T-cell (primary cell): ENCODE measurements at regions of chr5 and their contacts with region 1.

Region 1: GRCh38 chr5:14816999-14817761 is 54.4 kb downstream of the ANKH start:
- DNase-seq: no peak
- ATAC-seq: no peak
- H3K4me3 ChIP-seq: no peak overlapping the region
- H3K4me3 Mint-ChIP-seq: no peak overlapping the region
- H3K27ac ChIP-seq: no peak overlapping the region
- H3K27ac Mint-ChIP-seq: peak overlapping the region in 1 of 2 donors; percentile 0
- H3K4me1 ChIP-seq: peaks cover 14 to 18% of the 10 kb centered on the region in 2 experiments
- H3K4me1 Mint-ChIP-seq: peaks cover 68 to 83% (median 83%) of the 10 kb centered on the region in 3 donors
- H3K27me3 ChIP-seq: no peaks in the 10 kb centered on the region
- H3K27me3 Mint-ChIP-seq: no peaks in the 10 kb centered on the region

Region 2: DNA sequence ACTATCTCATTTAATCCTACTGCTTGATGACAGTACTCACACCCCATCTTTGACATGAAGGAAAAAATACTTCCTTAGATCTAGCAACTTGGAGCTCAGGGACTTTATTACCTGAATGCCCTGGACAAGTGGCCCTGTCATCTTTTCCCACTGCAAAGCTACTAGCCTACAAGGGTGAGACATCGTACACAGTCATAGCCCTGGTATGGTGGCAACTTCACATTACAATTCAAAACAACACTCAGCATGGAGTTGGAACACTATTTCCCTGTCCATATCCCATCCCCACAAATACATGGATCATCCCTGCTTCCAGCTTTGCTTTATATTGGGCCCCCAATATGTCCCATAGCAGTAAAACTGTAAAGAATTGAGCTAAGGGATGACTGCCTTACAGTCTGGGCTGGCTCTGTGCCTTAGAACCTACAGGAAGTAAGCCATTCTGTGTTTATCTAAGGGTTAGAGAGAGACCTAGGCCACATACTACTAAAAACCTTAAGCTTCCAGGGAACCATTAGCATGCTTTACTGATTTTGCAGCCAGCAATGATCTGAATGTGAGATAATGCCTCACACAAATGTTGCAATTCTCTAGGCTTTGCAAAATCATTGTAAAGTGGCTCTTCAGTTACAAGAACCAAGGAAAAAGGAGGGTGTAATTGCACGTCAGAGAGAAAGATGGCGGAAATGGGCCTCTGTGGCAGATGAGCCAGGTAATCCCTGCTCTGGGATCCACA is 96.8 kb before region 1 on chr5:
- CTCF ChIA-PET with region 1: interaction called in 1 of 2 experiments, 4 read pairs
- POLR2A ChIA-PET with region 1: interaction called in 1 of 2 experiments, 13 read pairs
- DNase-seq: no peak
- ATAC-seq: peak in 3 of 4 experiments; percentile 66 to 84 (median 71)
- H3K4me3 ChIP-seq: no peak overlapping the region
- H3K4me3 Mint-ChIP-seq: no peak overlapping the region
- H3K27ac ChIP-seq: no peak overlapping the region
- H3K27ac Mint-ChIP-seq: peak overlapping the region; percentile 58 to 76
- H3K4me1 ChIP-seq: peaks cover 0 to 10% of the 10 kb centered on the region in 2 experiments
- H3K4me1 Mint-ChIP-seq: peaks cover 31 to 38% (median 32%) of the 10 kb centered on the region in 3 donors
- H3K27me3 ChIP-seq: no peaks in the 10 kb centered on the region
- H3K27me3 Mint-ChIP-seq: no peaks in the 10 kb centered on the region

Region 3: GRCh38 chr5:15056988-15057592 is 239.9 kb after region 1 on chr5:
- CTCF ChIA-PET with region 1: no interaction called
- POLR2A ChIA-PET with region 1: no interaction called
- DNase-seq: no peak
- ATAC-seq: no peak
- H3K4me3 ChIP-seq: no peak overlapping the region
- H3K4me3 Mint-ChIP-seq: no peak overlapping the region
- H3K27ac ChIP-seq: no peak overlapping the region
- H3K27ac Mint-ChIP-seq: no peak overlapping the region
- H3K4me1 ChIP-seq: no peaks in the 10 kb centered on the region
- H3K4me1 Mint-ChIP-seq: no peaks in the 10 kb centered on the region
- H3K27me3 ChIP-seq: peaks cover 0 to 18% of the 10 kb centered on the region in 2 experiments
- H3K27me3 Mint-ChIP-seq: peaks cover 8 to 32% of the 10 kb centered on the region in 2 donors